GM10248 (cell line): ENCODE measurements at regions of chr3 and their contacts with region 1.

Region 1: GRCh38 chr3:186617038-186617946 is 4.4 kb downstream of the AHSG start:
- DNase-seq: peak; percentile 91
- CTCF ChIP-seq: peak; percentile 95

Region 2: GRCh38 chr3:185968168-185968567 is 649.1 kb before region 1 on chr3:
- CTCF ChIA-PET with region 1: interaction called, 13 read pairs
- POLR2A ChIA-PET with region 1: no interaction called
- DNase-seq: no peak
- CTCF ChIP-seq: no peak

Region 3: DNA sequence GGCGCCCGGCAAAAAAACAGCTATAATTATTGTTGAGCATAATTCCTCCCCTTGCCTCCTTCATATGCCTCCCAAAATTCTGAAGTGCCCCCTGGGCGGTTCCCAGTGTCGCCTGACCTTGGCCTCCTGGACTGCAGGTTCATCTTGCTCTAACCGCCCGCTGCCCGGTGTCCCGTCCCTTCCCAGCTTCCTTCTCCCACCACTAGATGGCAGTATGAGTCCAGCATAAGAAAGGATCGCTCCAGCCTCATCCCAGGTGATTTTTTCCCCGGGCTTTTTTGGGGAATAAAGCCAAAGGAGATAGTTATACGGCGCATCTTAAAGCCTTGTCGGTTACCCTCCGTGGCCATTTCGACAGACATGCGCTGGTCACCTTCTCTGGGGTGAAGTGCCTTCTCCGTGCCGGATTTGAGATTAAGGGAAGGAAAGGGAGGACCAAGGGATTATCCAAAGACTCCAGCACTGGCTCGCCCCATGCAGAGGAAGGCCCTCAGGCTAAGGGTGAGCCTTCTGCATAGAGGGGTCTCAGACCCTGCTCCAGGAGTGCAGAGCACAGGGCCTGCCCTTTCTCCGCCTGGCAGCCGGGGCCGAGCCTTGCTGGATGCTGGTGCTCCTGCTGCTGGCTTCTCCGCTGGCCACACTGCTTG is 633.7 kb before region 1 on chr3:
- CTCF ChIA-PET with region 1: interaction called, 105 read pairs
- POLR2A ChIA-PET with region 1: no interaction called
- DNase-seq: peak; percentile 81
- CTCF ChIP-seq: peak; percentile 89

Region 4: GRCh38 chr3:186570096-186570940 is 47.0 kb before region 1 on chr3 and contains the start of gene DNAJB11:
- CTCF ChIA-PET with region 1: interaction called, 38 read pairs
- POLR2A ChIA-PET with region 1: interaction called, 3 read pairs
- DNase-seq: peak; percentile 98
- CTCF ChIP-seq: no peak

Region 5: GRCh38 chr3:186640473-186640818 is 23.2 kb after region 1 on chr3:
- CTCF ChIA-PET with region 1: interaction called, 92 read pairs
- POLR2A ChIA-PET with region 1: no interaction called
- DNase-seq: no peak
- CTCF ChIP-seq: no peak

Region 6: DNA sequence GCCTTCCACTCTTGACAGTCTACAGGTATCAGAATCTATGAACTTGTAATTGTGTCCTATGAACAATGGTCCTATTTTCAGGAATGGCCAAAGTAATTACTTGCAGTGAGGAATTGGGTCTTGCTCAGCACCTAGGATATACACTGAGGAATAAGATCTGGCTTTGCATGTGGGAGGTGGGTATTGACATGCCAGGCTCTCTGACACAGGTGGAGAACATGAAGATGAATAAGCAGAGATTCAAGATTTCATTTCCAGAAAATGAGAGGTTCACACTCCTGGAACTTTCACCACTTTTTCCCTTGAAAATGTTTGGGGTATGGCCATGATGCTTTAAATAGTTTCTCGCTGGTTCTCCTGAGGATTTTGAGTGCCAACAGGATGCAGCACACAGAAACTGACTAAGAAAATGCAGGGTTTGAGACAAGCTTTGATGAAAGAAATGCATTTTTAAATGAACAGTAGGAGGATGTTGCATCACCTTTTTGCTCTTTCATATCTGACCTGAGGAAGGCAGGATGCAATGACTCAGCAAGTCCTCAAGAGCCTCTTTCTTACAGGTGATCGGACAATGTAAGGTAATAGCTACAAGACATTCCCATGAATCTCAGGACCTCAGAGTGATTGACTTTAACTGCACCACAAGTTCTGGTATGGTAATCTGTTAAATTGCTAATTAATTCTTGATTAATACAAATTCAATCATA is 52.2 kb after region 1 on chr3:
- CTCF ChIA-PET with region 1: interaction called, 10 read pairs
- POLR2A ChIA-PET with region 1: interaction called, 3 read pairs
- DNase-seq: no peak
- CTCF ChIP-seq: no peak

Region 7: DNA sequence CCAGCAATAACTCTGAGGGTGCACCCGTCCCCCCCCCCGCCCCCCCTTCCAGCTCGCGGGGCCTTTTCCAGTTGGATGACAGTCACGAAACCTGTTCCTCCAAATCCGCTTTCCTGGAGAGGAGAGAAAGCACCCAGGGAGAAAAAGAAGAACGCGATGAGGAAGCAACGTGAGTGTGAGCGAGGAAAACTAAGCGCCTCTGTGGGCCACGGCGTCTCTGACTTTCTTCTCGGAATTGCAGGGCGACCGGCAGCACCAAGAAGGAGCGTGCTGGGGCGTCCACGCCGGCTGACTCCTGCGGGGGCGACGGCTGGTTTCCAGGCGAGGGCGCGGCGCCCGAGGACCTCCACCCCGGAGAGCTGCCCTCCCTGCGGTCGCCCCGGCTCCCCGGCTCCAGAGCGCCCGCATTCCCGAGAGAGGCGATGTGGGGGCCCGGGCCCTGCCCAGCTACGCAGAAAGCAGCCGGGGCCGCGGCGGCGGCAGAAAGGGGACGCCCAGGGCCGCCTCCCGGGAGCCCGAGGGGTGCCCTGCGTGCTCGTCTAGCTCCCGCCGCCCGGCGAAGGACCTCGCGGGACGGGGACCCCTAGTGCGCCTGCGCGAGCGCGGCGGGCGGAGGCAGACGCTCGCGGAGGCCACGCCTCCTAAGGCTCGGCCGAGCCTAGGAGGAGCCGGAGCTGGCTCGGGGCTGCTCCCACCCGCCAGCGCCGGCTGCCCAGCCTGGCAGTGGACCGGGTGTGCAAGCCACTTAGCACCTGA is 209.9 kb after region 1 on chr3:
- CTCF ChIA-PET with region 1: interaction called, 202 read pairs
- POLR2A ChIA-PET with region 1: no interaction called
- DNase-seq: peak; percentile 99
- CTCF ChIP-seq: no peak